ENCODE measurements at regions of chr17 and their contacts with region 1.

Region 1: DNA sequence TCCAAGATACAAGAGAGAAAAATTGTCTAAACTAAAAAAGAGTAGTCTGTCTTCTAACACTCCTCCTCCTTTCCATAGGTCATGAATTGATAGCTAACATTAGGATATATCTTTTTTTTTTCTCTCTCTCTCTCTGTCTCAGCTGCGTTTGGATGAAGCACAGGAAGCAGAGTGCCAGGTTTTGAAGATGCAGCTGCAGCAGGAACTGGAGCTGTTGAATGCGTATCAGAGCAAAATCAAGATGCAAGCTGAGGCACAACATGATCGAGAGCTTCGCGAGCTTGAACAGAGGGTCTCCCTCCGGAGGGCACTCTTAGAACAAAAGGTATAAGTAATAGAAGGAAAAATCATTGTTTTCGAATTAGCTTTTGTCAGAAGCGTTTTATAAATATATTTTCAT is 32.9 kb downstream of the ABHD15 start:
- DNase-seq: no peak
- H3K4me3 ChIP-seq: no peak overlapping the region
- H3K4me3 Mint-ChIP-seq: no peak overlapping the region
- H3K27ac ChIP-seq: no peak overlapping the region
- H3K27ac Mint-ChIP-seq: no peak overlapping the region
- H3K4me1 ChIP-seq: no peaks in the 10 kb centered on the region
- H3K4me1 Mint-ChIP-seq: no peaks in the 10 kb centered on the region
- H3K27me3 ChIP-seq: no peaks in the 10 kb centered on the region
- H3K27me3 Mint-ChIP-seq: no peaks in the 10 kb centered on the region

Region 2: DNA sequence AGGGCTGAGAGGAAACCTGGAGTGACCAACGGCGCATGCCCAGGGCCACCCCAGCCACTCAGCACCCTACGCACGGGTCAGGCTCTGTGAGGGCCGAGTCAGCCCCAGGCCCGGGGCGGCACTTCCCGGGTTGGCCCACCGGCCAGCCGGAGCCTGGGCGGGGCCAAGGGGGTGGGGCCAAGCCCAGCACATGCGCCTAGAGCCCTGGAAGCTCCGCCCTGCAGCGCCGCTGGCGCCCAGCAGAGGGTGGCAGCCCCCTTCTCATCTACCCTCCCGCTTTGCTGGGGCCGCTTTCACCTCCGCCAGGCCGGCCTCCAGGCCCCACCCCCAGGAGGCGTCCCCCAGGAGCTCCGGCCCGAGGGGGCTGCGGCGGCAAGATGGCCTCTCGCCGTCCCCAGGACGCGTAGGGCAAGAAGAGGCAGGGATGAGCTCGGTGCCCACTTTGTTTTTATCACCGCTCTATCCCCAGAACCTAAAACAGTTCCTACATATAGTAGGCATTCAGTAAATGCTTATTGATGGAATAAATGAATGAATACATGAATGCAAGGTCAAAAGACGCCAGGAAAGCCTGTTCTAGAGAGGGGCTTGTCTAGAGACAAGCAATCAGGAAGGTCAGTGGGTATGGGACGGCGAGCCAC is 385.1 kb before region 1 on chr17:
- CTCF ChIA-PET with region 1: interaction called, 3 read pairs
- POLR2A ChIA-PET with region 1: no interaction called
- intact Hi-C with region 1: loop called (anchors 10 kb)
- DNase-seq: peak; percentile 88 to 91 (median 89)
- H3K4me3 ChIP-seq: peak overlapping the region; percentile 41 to 42
- H3K4me3 Mint-ChIP-seq: peak overlapping the region; percentile 68 to 84 (median 75)
- H3K27ac ChIP-seq: peak overlapping the region; percentile 53
- H3K27ac Mint-ChIP-seq: peak overlapping the region; percentile 66 to 92 (median 90)
- H3K4me1 ChIP-seq: peaks cover 27% of the 10 kb centered on the region
- H3K4me1 Mint-ChIP-seq: peaks cover 23 to 62% (median 33%) of the 10 kb centered on the region in 4 donors
- H3K27me3 ChIP-seq: no peaks in the 10 kb centered on the region
- H3K27me3 Mint-ChIP-seq: no peaks in the 10 kb centered on the region

Region 3: DNA sequence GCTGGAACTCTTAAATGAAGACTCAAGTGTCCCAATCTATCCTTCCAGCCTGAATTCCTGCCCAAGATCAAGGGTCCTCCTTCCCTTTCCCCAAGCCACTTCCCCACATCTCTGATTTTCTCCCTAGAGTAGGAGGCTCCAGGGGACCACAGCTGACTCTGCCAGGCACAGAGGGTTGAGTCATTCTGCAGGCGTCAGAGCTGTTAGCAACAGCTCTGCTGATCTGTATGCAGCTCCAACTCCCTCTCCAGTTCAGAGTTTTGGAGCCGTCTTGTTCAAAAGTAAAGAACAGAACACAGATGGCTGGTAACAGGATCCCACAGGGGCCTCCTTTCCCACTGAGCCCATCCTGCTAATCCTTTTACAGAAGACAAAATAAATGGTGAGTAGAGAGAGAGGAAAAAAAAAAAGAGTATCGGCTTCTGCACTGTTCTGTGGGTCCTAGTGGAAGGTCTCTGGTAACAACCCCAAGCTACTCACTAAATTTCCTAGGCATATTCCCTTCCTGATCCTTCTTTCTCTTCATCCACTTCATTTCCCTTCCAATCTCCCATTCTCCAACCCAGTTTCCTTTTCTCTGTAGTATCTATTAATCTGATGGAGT is 157.2 kb before region 1 on chr17:
- CTCF ChIA-PET with region 1: interaction called, 103 read pairs
- POLR2A ChIA-PET with region 1: no interaction called
- intact Hi-C with region 1: no loop called
- DNase-seq: no peak
- H3K4me3 ChIP-seq: no peak overlapping the region
- H3K4me3 Mint-ChIP-seq: no peak overlapping the region
- H3K27ac ChIP-seq: no peak overlapping the region
- H3K27ac Mint-ChIP-seq: peak overlapping the region in 1 of 7 donors; percentile 7
- H3K4me1 ChIP-seq: no peaks in the 10 kb centered on the region
- H3K4me1 Mint-ChIP-seq: no peaks in the 10 kb centered on the region
- H3K27me3 ChIP-seq: no peaks in the 10 kb centered on the region
- H3K27me3 Mint-ChIP-seq: peaks cover 2 to 3% of the 10 kb centered on the region in 2 donors

Region 4: DNA sequence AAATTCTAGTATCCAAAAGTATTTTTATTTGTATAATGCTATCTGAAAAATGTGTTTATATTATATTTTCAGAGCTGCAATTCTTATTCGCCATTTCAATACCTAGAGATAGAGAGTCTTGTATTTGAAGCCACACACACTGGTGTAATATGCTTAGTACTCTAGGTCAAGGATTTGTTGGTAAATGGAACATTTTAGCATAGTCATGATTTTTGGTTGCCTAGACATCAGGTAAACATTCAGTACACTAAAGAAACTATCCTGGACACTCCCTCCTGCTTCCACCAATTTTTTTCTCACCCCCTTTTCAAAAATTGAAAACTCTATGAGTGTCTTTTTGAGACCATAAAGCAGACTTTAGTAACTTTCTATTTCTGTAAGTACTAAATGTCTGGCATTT is 12.1 kb after region 1 on chr17:
- CTCF ChIA-PET with region 1: interaction called, 21 read pairs
- POLR2A ChIA-PET with region 1: no interaction called
- intact Hi-C with region 1: no loop called
- DNase-seq: no peak
- H3K4me3 ChIP-seq: no peak overlapping the region
- H3K4me3 Mint-ChIP-seq: no peak overlapping the region
- H3K27ac ChIP-seq: no peak overlapping the region
- H3K27ac Mint-ChIP-seq: no peak overlapping the region
- H3K4me1 ChIP-seq: no peaks in the 10 kb centered on the region
- H3K4me1 Mint-ChIP-seq: peaks cover 3 to 18% (median 6%) of the 10 kb centered on the region in 4 donors
- H3K27me3 ChIP-seq: no peaks in the 10 kb centered on the region
- H3K27me3 Mint-ChIP-seq: no peaks in the 10 kb centered on the region

Measured in CD4-positive, alpha-beta memory T cell (primary cell).